Heart right ventricle (tissue), 16 donors: ENCODE measurements at regions of chr1 and their contacts with region 1.

Region 1: DNA sequence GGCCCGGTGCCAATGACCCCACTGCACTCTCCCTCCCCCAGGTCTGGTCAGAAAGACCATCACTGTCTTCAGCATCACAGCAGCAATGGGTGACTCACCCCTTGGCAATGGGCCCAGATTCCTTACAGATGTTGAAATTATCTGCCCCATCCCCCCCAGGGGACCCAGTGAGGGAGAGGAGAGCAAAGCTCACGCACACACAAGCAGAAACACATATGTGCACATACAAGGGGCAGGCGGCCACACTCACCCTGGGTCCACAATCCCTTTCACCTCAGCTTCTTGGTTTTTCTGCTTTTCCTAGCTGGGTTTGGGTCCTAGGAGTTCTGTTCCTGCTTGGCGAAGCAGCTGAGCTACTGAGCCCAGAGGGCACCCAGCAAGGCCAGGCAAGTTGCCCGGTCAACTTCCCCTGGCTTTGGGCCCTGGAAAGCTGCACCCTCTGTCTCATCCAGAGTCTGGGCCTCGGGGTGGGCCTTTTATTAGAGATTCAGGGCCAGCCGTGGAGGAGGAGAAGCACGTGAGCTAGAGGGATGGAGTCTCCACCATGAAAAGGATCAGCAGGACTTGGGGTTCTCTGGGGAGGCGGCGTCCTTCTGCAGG is 2.6 kb downstream of the COL16A1 start:
- DNase-seq: peak; percentile 78 to 89
- ATAC-seq: peak; percentile 22 to 79 (median 62)
- H3K4me3 ChIP-seq: peak overlapping the region in 3 of 10 donors; percentile 5 to 13 (median 7)
- H3K27ac ChIP-seq: peak overlapping the region in 9 of 10 donors; percentile 54 to 90 (median 77)
- H3K4me1 ChIP-seq: peaks cover 17 to 68% (median 39%) of the 10 kb centered on the region in 9 donors
- H3K27me3 ChIP-seq: peaks cover 0 to 23% (median 0%) of the 10 kb centered on the region in 7 donors
- CTCF ChIP-seq: no peak

Region 2: DNA sequence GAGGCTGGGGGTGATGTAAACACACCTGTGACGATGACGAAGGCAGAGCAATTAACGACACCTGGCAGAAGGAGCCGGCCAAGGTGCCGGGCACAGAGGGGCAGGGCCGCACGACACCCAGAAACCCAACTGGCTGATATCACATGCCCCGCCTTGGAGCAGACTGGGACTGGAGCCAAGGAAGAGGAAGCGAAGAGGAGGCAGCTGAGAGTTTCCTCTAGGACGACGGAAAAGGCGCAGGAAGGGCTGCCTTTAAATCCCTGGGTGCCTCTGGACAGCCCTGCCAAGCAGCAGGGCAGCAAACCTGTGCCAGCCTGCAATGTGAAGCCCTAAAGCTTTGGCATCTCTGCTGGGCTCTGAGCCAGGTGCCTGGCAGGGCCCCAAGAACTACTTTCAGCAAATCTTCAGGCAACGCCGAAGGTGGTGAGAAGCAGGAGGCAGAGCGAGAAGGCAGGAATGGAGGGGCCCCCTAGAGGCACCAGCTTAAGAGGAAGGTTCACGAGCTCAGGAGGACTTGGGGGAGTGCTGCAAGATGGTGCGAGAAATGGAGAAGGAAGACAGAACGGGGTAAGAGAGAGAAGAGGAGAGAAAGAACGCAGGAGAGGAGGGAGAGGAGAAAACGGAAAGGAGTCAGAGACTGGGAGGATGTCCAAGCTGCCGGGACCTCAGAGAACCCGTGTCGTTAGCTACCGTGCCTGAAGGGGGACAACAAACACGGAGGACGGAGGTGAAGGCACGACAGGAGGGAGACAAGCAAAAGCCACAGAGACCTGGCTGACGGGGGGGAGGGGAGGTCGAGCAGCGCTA is 31.2 kb before region 1 on chr1:
- intact Hi-C with region 1: loop called in 1 of 10 experiments (anchors 5 kb)
- DNase-seq: peak; percentile 83
- ATAC-seq: peak; percentile 31 to 76 (median 68)
- H3K4me3 ChIP-seq: peak overlapping the region in 9 of 10 donors; percentile 6 to 53 (median 41)
- H3K27ac ChIP-seq: peak overlapping the region; percentile 13 to 87 (median 66)
- H3K4me1 ChIP-seq: peaks cover 35 to 81% (median 72%) of the 10 kb centered on the region in 9 donors
- H3K27me3 ChIP-seq: peaks cover 0 to 17% (median 0%) of the 10 kb centered on the region in 7 donors
- CTCF ChIP-seq: peak in 5 of 9 donors; percentile 7 to 42 (median 21)